Esophagus muscularis mucosa (tissue), 4 donors: ENCODE measurements at regions of chr3 and their contacts with region 1.

Region 1: GRCh38 chr3:14921078-14921616 is 26.2 kb upstream of the NR2C2 start:
- DNase-seq: peak; percentile 96
- H3K4me3 ChIP-seq: no peak overlapping the region
- H3K27ac ChIP-seq: no peak overlapping the region
- H3K4me1 ChIP-seq: peaks cover 7 to 14% (median 9%) of the 10 kb centered on the region in 4 donors
- H3K27me3 ChIP-seq: no peaks in the 10 kb centered on the region
- CTCF ChIP-seq: peak in 2 of 3 experiments; percentile 94 to 98
- EP300 ChIP-seq: no peak
- POLR2A ChIP-seq: no peak

Region 2: DNA sequence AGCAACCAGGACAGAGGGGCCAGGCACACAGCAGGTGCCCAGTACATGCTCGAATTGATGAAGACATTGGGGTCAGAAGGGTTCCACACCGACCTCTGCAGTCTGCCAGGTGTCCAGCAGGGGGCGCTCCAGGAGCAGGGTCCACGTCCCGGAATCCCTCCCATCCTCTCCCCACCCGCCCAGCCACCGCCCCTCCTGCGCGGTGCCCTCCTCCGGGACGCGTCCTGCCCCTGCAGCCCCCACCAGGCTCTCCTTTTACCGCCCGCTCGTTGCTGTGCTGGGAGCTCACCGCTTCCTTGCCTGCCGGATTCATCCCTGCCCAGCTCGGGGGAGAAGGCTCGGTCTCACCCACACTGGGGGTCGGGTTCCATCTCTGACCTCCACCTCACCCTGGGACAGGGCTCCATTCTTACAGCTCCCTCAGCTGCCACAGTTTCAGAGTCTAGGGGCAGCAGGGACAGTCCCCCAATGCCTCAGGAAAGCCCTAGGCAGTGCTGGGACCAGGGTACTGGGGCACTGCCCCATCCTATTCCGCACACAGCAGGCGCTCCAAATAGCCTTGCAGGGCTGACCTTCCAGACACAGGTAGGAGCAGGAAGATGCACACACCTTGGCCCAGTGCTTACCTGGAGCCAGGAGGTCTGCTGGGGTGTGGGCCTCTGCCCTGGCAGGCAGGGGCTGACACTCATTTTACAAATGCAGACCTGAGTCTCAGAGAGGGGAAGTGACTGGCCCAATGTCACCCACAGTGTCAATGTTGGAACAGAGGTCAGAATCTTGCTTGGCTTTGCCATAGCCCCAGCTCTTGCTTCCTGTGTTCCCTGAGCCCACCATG is 412.0 kb before region 1 on chr3:
- intact Hi-C with region 1: loop called (anchors 5 kb)
- DNase-seq: no peak
- H3K4me3 ChIP-seq: peak overlapping the region in 1 of 4 donors; percentile 27
- H3K27ac ChIP-seq: no peak overlapping the region
- H3K4me1 ChIP-seq: peaks cover 4 to 7% (median 6%) of the 10 kb centered on the region in 4 donors
- H3K27me3 ChIP-seq: peaks cover 0 to 14% (median 0%) of the 10 kb centered on the region in 4 donors
- CTCF ChIP-seq: peak; percentile 69 to 96 (median 94)
- EP300 ChIP-seq: no peak
- POLR2A ChIP-seq: no peak

Region 3: DNA sequence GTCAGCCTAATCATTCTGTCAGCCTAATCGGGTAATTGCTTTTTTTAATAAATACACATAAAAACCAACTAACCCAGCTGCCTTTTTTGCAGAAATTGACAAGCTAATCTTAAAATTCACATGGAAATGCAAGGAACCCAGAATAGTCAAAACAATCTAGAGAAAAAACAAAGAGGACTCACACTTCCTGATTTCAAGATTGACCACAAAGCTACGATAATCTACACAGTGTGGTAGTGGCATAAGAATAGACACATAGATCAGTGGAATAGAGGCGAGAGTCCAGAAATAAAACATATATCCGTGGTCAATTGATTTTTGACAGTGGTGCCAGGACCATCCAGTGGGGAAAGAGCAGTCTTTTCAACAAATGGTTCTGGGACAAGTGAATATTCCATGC is 248.6 kb before region 1 on chr3:
- intact Hi-C with region 1: loop called (anchors 5 kb)
- DNase-seq: no peak
- H3K4me3 ChIP-seq: no peak overlapping the region
- H3K27ac ChIP-seq: no peak overlapping the region
- H3K4me1 ChIP-seq: no peaks in the 10 kb centered on the region
- H3K27me3 ChIP-seq: no peaks in the 10 kb centered on the region
- CTCF ChIP-seq: no peak
- EP300 ChIP-seq: no peak
- POLR2A ChIP-seq: no peak

Region 4: DNA sequence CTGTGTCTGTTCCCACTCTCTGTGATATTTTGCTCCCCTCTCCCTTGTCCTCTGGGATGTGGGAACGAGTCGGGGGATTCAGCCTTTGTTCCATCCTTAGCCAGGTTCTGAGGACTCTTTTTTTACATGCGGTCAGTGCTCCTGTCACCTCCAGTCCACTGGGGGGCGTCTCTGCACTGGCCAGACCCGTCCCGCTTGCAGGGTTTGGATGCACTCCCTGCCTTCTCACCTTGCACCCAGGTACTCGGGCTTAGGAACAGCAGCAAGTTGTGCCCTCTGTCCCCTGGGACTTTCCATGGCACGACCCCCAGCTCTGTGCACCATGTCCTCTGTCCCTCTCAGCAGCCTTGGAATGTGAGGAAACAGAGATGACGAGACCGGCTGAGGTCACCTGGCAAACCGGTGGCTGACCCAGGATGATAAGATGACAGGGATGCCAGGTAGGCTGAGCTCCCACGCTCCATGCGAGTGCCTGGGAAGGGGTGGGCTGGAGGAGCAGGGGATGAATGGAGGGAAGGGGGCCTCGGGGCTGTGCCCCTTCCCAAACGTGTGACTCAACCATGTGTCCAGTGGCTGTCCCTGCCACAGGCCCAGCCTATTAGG is 129.7 kb before region 1 on chr3:
- intact Hi-C with region 1: loop called (anchors 2 kb)
- DNase-seq: no peak
- H3K4me3 ChIP-seq: no peak overlapping the region
- H3K27ac ChIP-seq: no peak overlapping the region
- H3K4me1 ChIP-seq: peaks cover 16 to 38% (median 30%) of the 10 kb centered on the region in 4 donors
- H3K27me3 ChIP-seq: peaks cover 0 to 19% (median 0%) of the 10 kb centered on the region in 4 donors
- CTCF ChIP-seq: peak; percentile 46 to 60 (median 51)
- EP300 ChIP-seq: no peak
- POLR2A ChIP-seq: no peak

Region 5: DNA sequence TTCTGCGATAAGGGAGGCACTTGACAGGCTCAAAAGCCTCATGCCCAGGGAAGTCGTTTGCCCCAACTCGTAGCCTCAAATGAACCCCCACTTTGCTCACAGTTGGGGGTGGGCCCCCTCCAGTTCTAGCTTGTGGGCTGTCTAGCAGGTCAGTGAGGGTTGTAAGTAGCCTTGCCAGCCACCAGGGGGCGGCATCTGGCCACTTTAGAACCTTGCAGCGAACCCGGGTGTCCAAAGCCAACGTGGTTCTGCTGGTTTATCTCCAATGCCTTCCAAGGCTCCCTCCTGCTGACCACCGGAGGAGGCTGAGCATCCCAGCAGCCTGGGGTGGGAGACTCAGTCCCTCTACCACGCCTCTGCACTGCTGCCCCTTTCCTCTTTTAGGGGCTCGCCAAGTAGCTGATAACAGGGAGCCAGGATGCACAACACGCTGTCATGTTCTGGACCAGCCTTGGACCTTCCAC is 187.0 kb after region 1 on chr3:
- intact Hi-C with region 1: loop called (anchors 10 kb)
- DNase-seq: no peak
- H3K4me3 ChIP-seq: no peak overlapping the region
- H3K27ac ChIP-seq: no peak overlapping the region
- H3K4me1 ChIP-seq: peaks cover 9 to 13% (median 11%) of the 10 kb centered on the region in 4 donors
- H3K27me3 ChIP-seq: no peaks in the 10 kb centered on the region
- CTCF ChIP-seq: peak; percentile 80 to 92 (median 82)
- EP300 ChIP-seq: no peak
- POLR2A ChIP-seq: no peak